Heart right ventricle (tissue), 16 donors: ENCODE measurements at regions of chr7 and their contacts with region 1.

Region 1: GRCh38 chr7:130896898-130897514 is 163.0 kb upstream of the KLF14 start:
- DNase-seq: peak; percentile 71 to 77
- ATAC-seq: peak; percentile 48 to 74 (median 65)
- H3K4me3 ChIP-seq: no peak overlapping the region
- H3K27ac ChIP-seq: peak overlapping the region in 7 of 10 donors; percentile 11 to 74 (median 56)
- H3K4me1 ChIP-seq: peaks cover 20 to 86% (median 57%) of the 10 kb centered on the region in 9 donors
- H3K27me3 ChIP-seq: no peaks in the 10 kb centered on the region
- CTCF ChIP-seq: peak; percentile 76 to 91 (median 85)

Region 2: DNA sequence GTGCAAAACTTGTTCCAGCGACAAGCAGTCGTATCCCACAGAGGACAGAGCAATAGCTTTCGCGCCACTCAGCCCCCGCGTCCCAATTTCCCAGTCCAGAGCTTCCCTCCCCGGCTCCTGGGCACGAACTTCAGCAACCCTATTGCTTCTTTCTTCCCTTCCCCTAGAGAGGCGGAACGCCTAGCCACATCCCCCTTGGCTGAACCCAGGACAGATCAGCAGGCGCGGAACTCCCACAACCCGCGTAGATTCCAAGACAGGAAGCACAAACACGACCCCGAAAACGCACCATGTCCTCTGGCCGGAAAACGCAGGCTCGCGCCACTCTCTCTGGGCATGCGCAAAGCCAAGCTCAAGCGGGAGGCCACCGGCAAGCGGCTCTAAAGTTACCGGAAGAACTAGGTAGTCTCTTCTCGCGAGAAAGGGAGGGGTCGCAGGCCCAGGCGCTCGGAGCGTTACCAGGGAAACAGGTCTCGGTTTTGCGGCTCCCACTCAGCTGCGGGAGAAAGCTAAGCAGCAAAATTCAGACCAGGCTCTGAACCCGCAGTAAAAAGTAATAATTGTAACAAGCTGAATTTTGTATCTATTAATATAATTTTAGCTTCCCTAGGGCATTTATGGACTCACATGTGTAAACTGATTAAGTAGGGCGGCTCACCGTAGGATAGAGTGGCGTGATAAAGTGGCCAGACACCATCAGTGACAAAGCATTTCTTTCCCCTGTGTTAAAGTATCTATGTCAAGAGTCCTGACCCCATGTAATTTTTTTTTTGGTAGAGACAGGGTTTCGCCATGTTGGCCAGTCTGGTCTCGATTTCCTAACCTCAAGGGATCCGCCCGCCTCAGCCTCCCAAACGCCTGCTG is 691.7 kb before region 1 on chr7 and contains the start of gene TMEM209:
- intact Hi-C with region 1: no loop called
- DNase-seq: peak; percentile 95 to 96
- ATAC-seq: peak; percentile 98 to 100 (median 99)
- H3K4me3 ChIP-seq: peak within 1 kb of the TSS; percentile 58 to 75 (median 74)
- H3K27ac ChIP-seq: peak within 1 kb of the TSS; percentile 18 to 94 (median 87)
- H3K4me1 ChIP-seq: peaks cover 4 to 12% (median 6%) of the 10 kb centered on the region in 9 donors
- H3K27me3 ChIP-seq: no peaks in the 10 kb centered on the region
- CTCF ChIP-seq: no peak
- total RNA-seq, gene TMEM209: 7.7 to 14.7 (median 12.6) TPM

Region 3: GRCh38 chr7:131007394-131008330 is 110.7 kb after region 1 on chr7:
- intact Hi-C with region 1: loop called in 6 of 10 experiments (anchors 5 to 10 kb)
- DNase-seq: peak in 1 of 2 donors; percentile 67
- ATAC-seq: peak; percentile 20 to 80 (median 70)
- H3K4me3 ChIP-seq: no peak overlapping the region
- H3K27ac ChIP-seq: peak overlapping the region in 9 of 10 donors; percentile 6 to 70 (median 46)
- H3K4me1 ChIP-seq: peaks cover 10 to 67% (median 59%) of the 10 kb centered on the region in 9 donors
- H3K27me3 ChIP-seq: no peaks in the 10 kb centered on the region
- CTCF ChIP-seq: peak in 7 of 9 donors; percentile 27 to 74 (median 69)

Region 4: DNA sequence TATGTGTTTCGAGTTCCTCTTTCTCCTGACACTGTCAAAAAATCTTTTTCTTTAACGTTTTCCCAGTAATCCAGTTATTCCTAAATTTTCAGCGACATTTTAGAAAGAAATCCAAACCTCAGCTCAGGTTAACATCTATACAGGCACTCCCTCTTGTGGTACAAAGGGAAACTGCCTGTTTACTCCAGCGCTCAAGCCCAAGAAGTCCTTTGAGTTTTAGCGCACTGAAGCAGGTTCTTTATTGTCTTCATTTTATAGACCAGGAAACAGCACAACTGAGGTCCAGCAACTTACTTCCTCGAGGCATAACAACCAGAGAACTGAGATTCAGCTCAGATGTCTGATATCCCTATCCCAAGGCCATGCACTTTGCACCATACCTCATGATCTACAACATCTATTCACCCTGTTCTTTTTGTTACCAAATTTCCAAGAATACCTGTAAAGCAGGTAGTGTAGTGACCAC is 143.5 kb after region 1 on chr7:
- intact Hi-C with region 1: loop called in 8 of 10 experiments (anchors 2 to 10 kb)
- DNase-seq: peak in 1 of 2 donors; percentile 71
- ATAC-seq: peak in 7 of 8 donors; percentile 60 to 83 (median 79)
- H3K4me3 ChIP-seq: no peak overlapping the region
- H3K27ac ChIP-seq: peak overlapping the region in 6 of 10 donors; percentile 30 to 79 (median 48)
- H3K4me1 ChIP-seq: peaks cover 0 to 64% (median 42%) of the 10 kb centered on the region in 9 donors
- H3K27me3 ChIP-seq: no peaks in the 10 kb centered on the region
- CTCF ChIP-seq: peak; percentile 76 to 97 (median 89)

Region 5: DNA sequence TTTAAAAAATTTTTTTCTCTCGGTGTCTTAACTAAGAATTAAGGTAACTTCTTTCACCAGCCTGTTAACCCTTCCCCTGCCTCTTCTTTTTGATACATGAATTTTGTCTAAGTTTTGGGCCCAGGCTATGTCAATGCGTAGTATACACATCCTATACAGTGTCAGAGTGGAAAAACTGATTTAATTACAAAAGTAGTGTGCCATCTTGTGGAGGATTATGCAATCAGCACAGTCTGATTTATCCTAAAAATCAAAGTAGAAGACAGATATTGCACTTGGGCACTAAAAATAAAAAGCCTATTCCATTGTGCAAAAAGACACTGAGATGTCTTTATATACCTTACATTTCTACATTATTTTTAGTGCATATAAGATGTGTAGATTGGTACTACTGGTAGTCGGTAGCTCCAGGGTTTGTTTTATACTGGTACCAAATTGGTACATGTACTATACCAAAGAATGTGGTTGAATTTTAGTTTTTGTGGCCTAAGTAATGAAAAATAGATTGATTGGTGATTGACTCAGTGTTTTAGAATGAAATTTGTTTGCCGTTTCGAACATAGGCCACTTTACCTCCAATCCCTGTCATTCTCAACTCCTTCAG is 527.3 kb after region 1 on chr7:
- intact Hi-C with region 1: loop called in 1 of 10 experiments (anchors 10 kb)
- DNase-seq: no peak
- ATAC-seq: peak; percentile 48 to 86 (median 64)
- H3K4me3 ChIP-seq: no peak overlapping the region
- H3K27ac ChIP-seq: no peak overlapping the region
- H3K4me1 ChIP-seq: peaks cover 0 to 29% (median 13%) of the 10 kb centered on the region in 9 donors
- H3K27me3 ChIP-seq: no peaks in the 10 kb centered on the region
- CTCF ChIP-seq: peak; percentile 44 to 76 (median 68)